ENCODE measurements at regions of chr4 and their contacts with region 1.

Region 1: DNA sequence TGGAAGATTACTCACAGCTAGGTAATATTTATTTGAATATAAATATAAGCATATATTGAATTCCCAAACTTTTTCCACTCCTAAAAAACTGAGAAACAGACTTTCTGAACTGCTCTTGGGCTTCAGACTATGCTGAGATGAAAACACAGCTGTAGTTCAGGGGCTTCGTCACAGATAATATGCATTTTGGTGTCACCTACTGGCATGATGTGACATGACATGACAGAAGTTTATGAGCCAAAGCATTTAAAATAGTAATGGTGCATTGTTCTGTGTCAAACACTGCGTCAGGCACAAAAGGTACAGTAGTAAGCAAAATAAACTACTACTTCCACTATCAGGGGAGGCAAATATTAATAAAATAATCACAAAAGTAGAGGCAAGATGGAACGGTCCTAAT is 171.3 kb downstream of the BTC start:
- DNase-seq: peak; percentile 79
- H3K4me3 ChIP-seq: no peak overlapping the region
- H3K27ac ChIP-seq: peak overlapping the region; percentile 98
- H3K4me1 ChIP-seq: peaks cover 87% of the 10 kb centered on the region
- H3K27me3 ChIP-seq: no peaks in the 10 kb centered on the region
- CTCF ChIP-seq: peak; percentile 39 to 46
- POLR2A ChIP-seq: no peak

Region 2: GRCh38 chr4:74228691-74229640 is 394.1 kb before region 1 on chr4:
- CTCF ChIA-PET with region 1: interaction called, 4 read pairs
- POLR2A ChIA-PET with region 1: no interaction called
- dilution Hi-C with region 1: no loop called
- intact Hi-C with region 1: loop called (anchors 2 kb)
- DNase-seq: peak; percentile 74
- H3K4me3 ChIP-seq: no peak overlapping the region
- H3K27ac ChIP-seq: no peak overlapping the region
- H3K4me1 ChIP-seq: peaks cover 23% of the 10 kb centered on the region
- H3K27me3 ChIP-seq: no peaks in the 10 kb centered on the region
- CTCF ChIP-seq: peak; percentile 86 to 95
- POLR2A ChIP-seq: no peak

Region 3: DNA sequence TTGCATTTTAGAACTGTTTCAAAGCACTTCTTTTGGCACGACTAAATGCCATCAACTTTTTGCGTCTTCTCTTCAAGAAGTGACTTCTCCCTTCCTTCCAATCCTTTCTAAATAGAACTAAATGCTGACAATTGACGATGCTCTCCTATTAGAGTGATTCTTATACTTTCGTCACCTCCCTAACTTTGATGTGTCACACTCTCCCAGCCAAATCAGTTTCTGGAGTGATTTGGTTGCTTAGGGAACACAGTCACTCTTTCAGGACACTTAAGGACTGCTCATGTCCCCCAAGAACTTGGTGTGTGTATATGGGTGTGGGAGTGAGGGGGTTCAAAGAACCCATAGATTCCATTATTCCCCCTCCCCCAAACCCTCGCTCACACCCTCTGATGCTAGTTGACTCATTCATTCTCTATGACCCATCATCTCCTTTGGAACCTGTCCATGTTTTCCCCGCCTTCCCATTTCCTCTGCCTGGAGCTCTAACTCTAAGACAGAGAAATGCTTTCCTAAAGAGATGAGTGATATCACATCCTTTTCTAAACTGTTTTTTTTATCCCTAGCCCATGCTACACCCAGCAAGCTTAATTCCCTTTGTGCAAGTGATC is 204.9 kb before region 1 on chr4:
- CTCF ChIA-PET with region 1: no interaction called
- POLR2A ChIA-PET with region 1: no interaction called
- dilution Hi-C with region 1: no loop called
- intact Hi-C with region 1: loop called (anchors 5 kb)
- DNase-seq: peak; percentile 95
- H3K4me3 ChIP-seq: no peak overlapping the region
- H3K27ac ChIP-seq: peak overlapping the region; percentile 58
- H3K4me1 ChIP-seq: peaks cover 18% of the 10 kb centered on the region
- H3K27me3 ChIP-seq: no peaks in the 10 kb centered on the region
- CTCF ChIP-seq: no peak
- POLR2A ChIP-seq: no peak

Region 4: DNA sequence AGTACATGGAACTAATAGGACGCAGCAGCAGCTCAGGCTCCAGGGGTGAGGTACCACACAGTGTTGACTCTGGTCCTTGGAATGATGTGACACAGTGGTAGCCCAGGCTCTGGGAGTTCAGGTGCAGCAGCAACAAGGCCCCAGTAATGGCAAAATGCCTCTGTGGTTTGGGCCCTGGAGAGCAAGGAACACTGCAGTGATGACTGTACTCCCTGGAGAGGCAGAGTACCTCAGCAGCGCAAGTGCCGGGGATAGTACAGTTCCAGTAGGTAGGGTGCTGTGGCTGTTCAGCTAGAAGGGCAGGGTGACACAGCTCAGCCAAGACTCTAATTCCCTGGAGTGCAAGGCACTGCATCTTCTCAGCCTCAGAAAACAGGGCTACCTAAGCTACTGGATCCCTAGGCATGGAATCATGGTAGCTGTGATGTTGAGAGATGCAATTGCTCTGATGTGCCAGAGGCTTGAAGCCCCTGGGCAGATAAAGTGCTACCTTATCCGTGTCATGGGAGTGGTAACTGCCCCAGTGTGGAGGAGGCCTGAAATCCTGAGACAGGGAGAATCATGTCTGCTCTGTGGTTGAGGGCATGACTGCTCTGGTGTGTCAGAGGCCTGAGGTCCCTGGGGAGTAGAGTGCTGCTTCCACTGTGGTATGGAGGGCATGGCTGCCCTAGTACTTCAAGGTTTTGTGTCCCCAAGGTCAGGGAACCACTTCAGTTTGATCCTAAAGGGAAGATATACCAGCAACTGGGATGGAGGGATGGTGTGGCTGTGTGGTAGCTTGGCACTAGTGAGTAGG is 122.9 kb before region 1 on chr4:
- CTCF ChIA-PET with region 1: no interaction called
- POLR2A ChIA-PET with region 1: no interaction called
- dilution Hi-C with region 1: no loop called
- intact Hi-C with region 1: loop called (anchors 1 kb)
- DNase-seq: no peak
- H3K4me3 ChIP-seq: no peak overlapping the region
- H3K27ac ChIP-seq: no peak overlapping the region
- H3K4me1 ChIP-seq: peaks cover 23% of the 10 kb centered on the region
- H3K27me3 ChIP-seq: no peaks in the 10 kb centered on the region
- CTCF ChIP-seq: no peak
- POLR2A ChIP-seq: no peak

Region 5: DNA sequence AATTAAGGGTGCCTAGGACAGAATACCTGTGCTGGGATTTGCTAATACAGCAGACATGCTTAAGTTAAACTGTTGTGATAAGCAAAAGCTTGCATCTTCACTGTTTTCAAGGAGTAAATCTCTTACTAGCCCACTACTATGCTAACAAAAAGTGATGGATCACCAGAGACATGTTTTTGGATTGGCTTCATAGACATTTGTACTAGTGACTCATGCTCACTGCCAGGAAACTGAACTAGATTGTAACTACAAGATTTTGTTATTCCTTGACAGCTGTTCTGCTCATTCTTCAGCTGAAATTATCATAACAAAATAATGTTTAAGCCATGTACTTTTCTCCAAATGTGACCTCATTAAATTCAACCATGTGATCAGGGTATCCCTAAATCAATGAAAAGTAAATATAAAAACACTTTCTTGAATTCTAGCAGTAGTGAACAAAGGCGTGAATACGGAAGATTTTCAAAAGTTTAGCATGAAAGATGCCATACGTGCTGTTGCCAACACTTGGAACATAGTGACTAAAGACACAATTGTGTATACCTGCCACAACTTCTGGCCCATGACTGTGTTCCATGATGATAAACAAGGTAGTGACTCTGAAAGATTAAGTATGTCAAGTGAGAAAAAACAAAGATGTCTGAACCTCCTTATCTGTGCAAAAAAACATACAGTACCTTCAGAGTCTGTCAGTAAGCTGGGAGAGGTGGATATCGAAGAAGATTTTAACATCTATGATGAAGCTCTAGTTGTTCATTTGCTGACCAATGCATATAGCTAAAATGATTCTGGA is 17.3 kb after region 1 on chr4:
- CTCF ChIA-PET with region 1: interaction called, 16 read pairs
- POLR2A ChIA-PET with region 1: no interaction called
- dilution Hi-C with region 1: no loop called
- intact Hi-C with region 1: no loop called
- DNase-seq: peak; percentile 95
- H3K4me3 ChIP-seq: no peak overlapping the region
- H3K27ac ChIP-seq: peak overlapping the region; percentile 78
- H3K4me1 ChIP-seq: peaks cover 20% of the 10 kb centered on the region
- H3K27me3 ChIP-seq: no peaks in the 10 kb centered on the region
- CTCF ChIP-seq: no peak
- POLR2A ChIP-seq: peak; percentile 18